ENCODE measurements at regions of chr17 and their contacts with region 1.

Region 1: DNA sequence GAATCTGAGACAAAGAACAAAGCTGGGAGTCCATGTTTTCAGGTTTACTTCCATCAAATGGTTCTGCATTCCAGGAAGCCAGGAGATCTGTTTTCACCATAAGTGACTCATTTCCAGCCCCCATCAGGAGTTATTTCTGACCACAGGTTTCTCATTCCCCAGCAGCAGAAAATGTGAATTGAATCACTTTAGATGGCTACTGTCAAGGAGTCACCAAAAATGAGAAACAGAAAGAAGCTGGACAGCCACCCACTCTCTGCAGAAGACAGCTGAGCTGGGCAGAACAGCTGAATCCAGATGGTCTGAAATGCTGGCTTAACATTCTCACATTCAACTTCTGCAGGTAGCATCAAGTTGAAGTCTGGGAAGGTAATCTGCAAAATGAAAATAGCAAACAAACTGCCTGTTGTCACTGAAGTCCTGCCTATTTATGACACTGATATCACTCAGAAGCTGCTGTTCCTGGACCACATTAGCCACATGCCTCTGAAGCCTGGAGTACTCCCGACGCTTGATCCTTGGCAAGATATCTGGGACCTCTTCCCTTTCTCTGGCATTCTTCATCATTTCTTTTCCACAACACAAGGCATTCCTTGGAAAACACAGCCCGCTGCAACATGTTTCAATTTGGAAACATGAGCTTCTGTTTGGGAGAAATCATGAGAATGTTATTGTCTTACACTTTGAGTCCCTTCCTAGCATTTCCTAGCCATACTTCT is 15.3 kb downstream of the CCL11 start:
- DNase-seq: no peak
- ATAC-seq: peak; percentile 57

Region 2: GRCh38 chr17:34235389-34236028 is 65.3 kb before region 1 on chr17:
- intact Hi-C with region 1: loop called (anchors 2 kb)
- DNase-seq: peak; percentile 86
- ATAC-seq: peak; percentile 90